GM12878 (cell line): ENCODE measurements at regions of chr14 and their contacts with region 1.

Region 1: DNA sequence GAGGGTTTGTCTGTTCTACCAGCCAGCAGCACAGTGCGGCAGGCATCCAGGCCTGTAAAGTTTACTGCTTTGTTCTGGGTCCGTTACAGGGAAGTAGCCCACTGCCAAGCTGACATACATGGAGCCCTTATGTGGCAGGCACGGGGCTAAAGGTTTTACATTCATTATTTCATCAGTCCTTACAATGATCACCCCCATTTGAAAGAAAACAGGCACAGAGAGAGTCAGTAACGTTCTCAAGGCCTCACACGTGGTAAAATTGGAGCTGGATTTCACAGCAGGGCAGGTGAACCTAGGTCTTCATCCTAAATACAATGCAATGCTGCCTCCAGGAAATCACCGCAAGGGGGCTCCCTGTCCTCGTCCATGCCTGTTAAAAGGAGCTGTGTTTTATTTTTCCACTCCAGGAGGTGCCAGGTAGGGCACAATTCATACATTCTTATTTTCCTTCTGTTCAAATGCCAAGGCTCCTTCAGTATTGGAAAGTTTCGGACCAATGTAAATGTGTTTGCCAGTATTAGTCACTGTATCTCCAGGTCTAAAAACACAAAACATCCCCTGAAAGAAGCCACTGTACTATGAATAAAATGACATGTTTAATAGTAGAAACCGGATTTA is 172.2 kb upstream of the GZMB start:
- DNase-seq: peak; percentile 16
- ATAC-seq: peak; percentile 89
- H3K4me3 ChIP-seq: no peak overlapping the region
- H3K27ac ChIP-seq: no peak overlapping the region
- H3K4me1 ChIP-seq: no peaks in the 10 kb centered on the region
- H3K27me3 ChIP-seq: no peaks in the 10 kb centered on the region
- CTCF ChIP-seq: peak; percentile 79 to 92 (median 82)
- EP300 ChIP-seq: no peak
- POLR2A ChIP-seq: no peak
- RAD21 ChIP-seq: peak; percentile 75

Region 2: GRCh38 chr14:24605435-24606190 is 200.6 kb before region 1 on chr14:
- CTCF ChIA-PET with region 1: no interaction called
- POLR2A ChIA-PET with region 1: no interaction called
- RAD21 ChIA-PET with region 1: no interaction called
- SMC1A ChIA-PET with region 1: no interaction called
- in situ Hi-C with region 1: no loop called
- intact Hi-C with region 1: no loop called
- DNase-seq: no peak
- ATAC-seq: peak; percentile 98
- H3K4me3 ChIP-seq: no peak overlapping the region
- H3K27ac ChIP-seq: no peak overlapping the region
- H3K4me1 ChIP-seq: peaks cover 8% of the 10 kb centered on the region
- H3K27me3 ChIP-seq: no peaks in the 10 kb centered on the region
- CTCF ChIP-seq: peak; percentile 73 to 98 (median 97)
- EP300 ChIP-seq: no peak
- POLR2A ChIP-seq: no peak
- RAD21 ChIP-seq: peak; percentile 93

Region 3: GRCh38 chr14:24794644-24795305 is 11.4 kb before region 1 on chr14:
- CTCF ChIA-PET with region 1: interaction called, 7 read pairs
- POLR2A ChIA-PET with region 1: no interaction called
- RAD21 ChIA-PET with region 1: interaction called, 7 read pairs
- SMC1A ChIA-PET with region 1: interaction called, 28 read pairs
- in situ Hi-C with region 1: no loop called
- intact Hi-C with region 1: no loop called
- DNase-seq: no peak
- ATAC-seq: no peak
- H3K4me3 ChIP-seq: no peak overlapping the region
- H3K27ac ChIP-seq: no peak overlapping the region
- H3K4me1 ChIP-seq: peaks cover 5% of the 10 kb centered on the region; the same call in 1 of the 2 replicates
- H3K27me3 ChIP-seq: no peaks in the 10 kb centered on the region
- CTCF ChIP-seq: no peak
- EP300 ChIP-seq: no peak
- POLR2A ChIP-seq: no peak
- RAD21 ChIP-seq: no peak

Region 4: DNA sequence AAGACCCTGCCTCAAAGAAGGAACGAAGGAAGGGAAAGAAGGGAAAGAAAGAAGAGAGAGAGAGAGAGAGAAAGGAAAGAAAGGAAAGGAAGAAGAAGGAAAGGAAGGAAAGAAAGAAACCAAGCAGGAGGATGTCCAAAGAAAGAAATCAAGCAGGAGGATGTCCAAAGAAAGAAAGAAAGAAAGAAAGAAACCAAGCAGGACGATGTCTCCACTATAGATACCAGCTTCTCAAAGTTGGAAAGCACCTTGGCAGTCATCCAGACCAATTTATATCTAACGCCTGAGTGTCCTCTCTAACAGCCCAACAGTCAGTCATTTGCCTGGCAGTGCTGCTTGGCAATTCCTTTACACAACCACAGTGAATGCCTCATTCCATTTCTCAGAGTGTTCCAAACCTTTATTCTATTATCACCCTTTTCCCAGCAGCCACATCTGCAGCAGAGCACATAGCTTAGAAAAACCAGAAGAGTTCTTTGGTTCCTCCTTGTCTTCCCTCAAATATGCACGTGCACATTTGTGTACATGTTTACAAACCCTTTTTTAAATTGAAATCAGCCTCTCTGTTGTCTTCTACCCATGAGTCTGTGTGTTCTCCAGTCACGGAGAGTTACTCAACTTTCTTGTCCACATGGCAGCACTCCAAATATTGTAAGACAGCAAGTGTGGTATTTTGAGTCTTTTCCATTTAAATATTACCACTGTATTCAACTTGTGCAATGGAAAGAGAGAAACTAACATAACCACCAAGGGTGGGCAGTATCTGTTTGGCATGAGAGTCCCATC is 105.3 kb after region 1 on chr14:
- CTCF ChIA-PET with region 1: interaction called, 8 read pairs
- POLR2A ChIA-PET with region 1: no interaction called
- RAD21 ChIA-PET with region 1: interaction called, 12 read pairs
- SMC1A ChIA-PET with region 1: interaction called, 17 read pairs
- in situ Hi-C with region 1: no loop called
- intact Hi-C with region 1: no loop called
- DNase-seq: peak; percentile 27
- ATAC-seq: peak; percentile 71
- H3K4me3 ChIP-seq: no peak overlapping the region
- H3K27ac ChIP-seq: no peak overlapping the region
- H3K4me1 ChIP-seq: no peaks in the 10 kb centered on the region
- H3K27me3 ChIP-seq: no peaks in the 10 kb centered on the region
- CTCF ChIP-seq: no peak
- EP300 ChIP-seq: no peak
- POLR2A ChIP-seq: no peak
- RAD21 ChIP-seq: no peak

Region 5: GRCh38 chr14:24978862-24979724 is 172.9 kb after region 1 on chr14:
- CTCF ChIA-PET with region 1: interaction called, 42 read pairs
- POLR2A ChIA-PET with region 1: no interaction called
- RAD21 ChIA-PET with region 1: interaction called, 14 read pairs
- SMC1A ChIA-PET with region 1: interaction called, 37 read pairs
- in situ Hi-C with region 1: no loop called
- intact Hi-C with region 1: no loop called
- DNase-seq: peak; percentile 46
- ATAC-seq: peak; percentile 81
- H3K4me3 ChIP-seq: no peak overlapping the region
- H3K27ac ChIP-seq: peak overlapping the region; percentile 18; the same call in 1 of the 2 replicates
- H3K4me1 ChIP-seq: peaks cover 5% of the 10 kb centered on the region; the same call in 1 of the 2 replicates
- H3K27me3 ChIP-seq: no peaks in the 10 kb centered on the region
- CTCF ChIP-seq: no peak
- EP300 ChIP-seq: peak; percentile 21 to 66; a peak in 2 of 4 replicates
- POLR2A ChIP-seq: no peak
- RAD21 ChIP-seq: no peak

Region 6: DNA sequence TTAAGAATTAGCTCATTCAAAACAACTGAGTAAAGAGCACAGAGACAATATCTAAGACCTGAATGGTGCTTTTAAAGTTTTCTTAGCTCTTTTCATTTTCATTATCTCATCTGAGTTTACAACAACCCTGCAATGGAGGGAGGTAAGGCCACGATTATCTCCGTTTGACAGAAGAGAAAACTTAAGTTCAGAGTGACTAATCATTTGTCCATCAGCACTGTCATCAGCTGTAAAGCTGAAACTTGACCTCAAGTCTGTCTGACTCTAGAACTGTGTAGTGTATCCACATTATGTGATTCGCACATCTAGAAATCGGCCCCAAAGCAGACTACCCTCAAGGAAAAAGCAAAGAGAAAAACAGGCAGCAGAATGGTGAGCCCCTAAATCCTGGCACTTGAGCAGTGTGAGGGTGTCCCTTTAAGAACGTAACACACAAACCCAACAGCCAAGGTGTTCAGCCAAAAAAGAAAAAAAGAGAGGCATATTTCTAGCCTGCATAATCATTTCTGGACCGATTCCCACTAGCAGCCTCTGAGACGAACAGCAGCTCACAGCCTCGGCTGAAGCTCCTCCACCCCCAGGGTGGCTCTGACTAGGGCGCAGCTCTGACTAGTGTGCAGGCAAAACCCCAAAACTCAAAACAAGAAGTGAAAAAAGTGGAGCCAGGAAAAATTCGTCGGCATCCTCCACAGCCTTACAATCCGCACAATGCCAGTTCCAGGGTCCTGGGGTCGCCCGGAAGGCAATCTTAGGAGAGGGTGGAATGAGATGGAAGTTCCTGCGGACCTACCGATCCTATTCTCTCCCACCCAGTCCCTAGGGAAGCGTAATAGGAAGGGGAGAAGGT is 242.2 kb after region 1 on chr14:
- CTCF ChIA-PET with region 1: interaction called, 15 read pairs
- POLR2A ChIA-PET with region 1: no interaction called
- RAD21 ChIA-PET with region 1: interaction called, 27 read pairs
- SMC1A ChIA-PET with region 1: interaction called, 25 read pairs
- in situ Hi-C with region 1: no loop called
- intact Hi-C with region 1: no loop called
- DNase-seq: no peak
- ATAC-seq: peak; percentile 25
- H3K4me3 ChIP-seq: no peak overlapping the region
- H3K27ac ChIP-seq: no peak overlapping the region
- H3K4me1 ChIP-seq: no peaks in the 10 kb centered on the region
- H3K27me3 ChIP-seq: peaks cover 0 to 12% of the 10 kb centered on the region in 2 experiments; a peak in 1 of 4 replicates
- CTCF ChIP-seq: no peak
- EP300 ChIP-seq: no peak
- POLR2A ChIP-seq: no peak
- RAD21 ChIP-seq: no peak

Region 7: DNA sequence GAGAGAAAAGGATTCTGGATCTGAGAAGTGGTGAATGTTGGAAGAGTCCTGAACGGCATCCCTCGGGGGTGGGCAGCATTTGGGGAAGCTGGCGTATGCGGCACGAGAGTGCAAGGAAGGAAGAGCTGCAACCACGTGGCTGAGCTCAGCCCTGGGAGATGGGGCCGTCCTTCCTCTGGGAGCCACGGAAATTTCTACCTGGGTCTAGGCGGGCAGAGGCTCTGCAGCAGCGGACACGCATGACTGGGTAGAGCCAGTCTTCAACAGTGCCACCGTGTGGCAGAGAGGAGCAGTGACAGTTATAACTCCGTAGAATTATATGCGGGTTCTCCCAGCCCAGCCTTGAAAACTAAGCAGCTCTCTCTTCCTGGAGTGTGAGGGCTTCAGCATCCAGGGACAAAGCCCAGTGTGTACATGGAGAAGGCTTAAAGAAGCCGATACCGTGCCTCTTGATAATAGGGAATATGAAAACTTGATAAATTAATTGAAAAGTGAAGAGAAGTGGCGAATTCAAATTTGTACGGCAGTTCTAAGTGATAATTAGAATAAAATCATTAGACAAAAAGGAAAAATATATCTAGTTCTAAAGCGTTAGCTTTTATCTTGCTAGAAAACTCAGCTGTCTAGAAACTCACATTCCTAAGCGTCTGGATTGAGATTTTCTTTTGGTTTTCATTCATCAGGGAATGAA is 326.7 kb after region 1 on chr14:
- CTCF ChIA-PET with region 1: interaction called, 229 read pairs
- POLR2A ChIA-PET with region 1: interaction called, 6 read pairs
- RAD21 ChIA-PET with region 1: interaction called, 129 read pairs
- SMC1A ChIA-PET with region 1: interaction called, 184 read pairs
- in situ Hi-C with region 1: loop called (anchors 5 kb)
- intact Hi-C with region 1: loop called (anchors 1 kb)
- DNase-seq: no peak
- ATAC-seq: peak; percentile 97
- H3K4me3 ChIP-seq: no peak overlapping the region
- H3K27ac ChIP-seq: no peak overlapping the region
- H3K4me1 ChIP-seq: no peaks in the 10 kb centered on the region
- H3K27me3 ChIP-seq: no peaks in the 10 kb centered on the region
- CTCF ChIP-seq: peak; percentile 76 to 79 (median 76)
- EP300 ChIP-seq: no peak
- POLR2A ChIP-seq: no peak
- RAD21 ChIP-seq: peak; percentile 57